ENCODE measurements at regions of chr7 and their contacts with region 1.

Region 1: DNA sequence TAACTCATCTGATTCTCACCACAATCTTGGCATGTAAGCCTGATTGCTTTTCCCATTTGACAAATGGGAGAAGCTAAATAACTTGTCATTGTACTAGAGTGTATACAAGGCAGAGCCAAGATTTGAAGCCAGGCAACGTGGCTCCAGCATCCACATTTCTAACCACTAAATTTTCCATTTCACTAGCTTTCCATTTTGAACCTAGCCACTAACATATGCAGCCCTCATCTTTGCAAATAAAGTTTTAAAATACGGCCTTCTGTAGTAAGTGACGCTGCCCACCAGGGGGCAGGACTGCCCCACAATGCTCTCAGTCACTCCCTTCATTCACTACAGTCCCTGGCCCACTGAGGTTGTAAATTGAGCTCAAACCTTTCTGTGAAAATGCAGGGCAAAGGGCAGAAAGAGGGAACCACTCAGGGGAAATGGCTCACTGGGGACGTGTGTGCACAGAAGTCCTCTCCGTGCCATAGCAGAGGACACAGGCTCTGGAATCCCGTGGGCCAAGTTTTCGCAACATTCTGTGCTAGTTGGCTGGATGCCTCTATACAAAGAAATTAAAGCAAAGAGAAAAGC is 315.7 kb downstream of the TNS3 start:
- DNase-seq: peak; percentile 68
- CTCF ChIP-seq: peak; percentile 81

Region 2: GRCh38 chr7:47088329-47089067 is 177.7 kb before region 1 on chr7:
- CTCF ChIA-PET with region 1: no interaction called
- POLR2A ChIA-PET with region 1: no interaction called
- DNase-seq: peak; percentile 58
- CTCF ChIP-seq: peak; percentile 80

Region 3: DNA sequence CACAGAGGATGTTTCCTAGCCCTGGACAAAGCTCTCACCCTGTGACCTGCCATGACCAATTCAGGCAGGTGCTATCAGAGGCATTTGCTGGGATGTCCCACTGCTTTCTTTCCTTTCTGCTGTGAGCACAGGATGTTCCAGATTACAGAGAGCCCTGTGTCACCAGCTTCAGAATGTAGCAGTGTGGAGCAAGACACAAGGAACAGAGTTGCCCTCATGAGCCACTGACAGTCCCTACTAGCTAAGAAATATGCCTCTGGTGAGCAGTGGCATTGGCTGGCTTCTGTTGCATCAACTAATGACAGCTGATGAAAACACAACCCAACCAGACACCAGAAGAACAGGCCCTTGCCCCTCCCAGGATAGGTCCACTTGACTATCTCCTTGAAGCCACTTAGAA is 21.5 kb before region 1 on chr7:
- CTCF ChIA-PET with region 1: interaction called, 11 read pairs
- POLR2A ChIA-PET with region 1: no interaction called
- DNase-seq: no peak
- CTCF ChIP-seq: no peak

Region 4: GRCh38 chr7:47283507-47284131 is 17.4 kb after region 1 on chr7:
- CTCF ChIA-PET with region 1: interaction called, 52 read pairs
- POLR2A ChIA-PET with region 1: no interaction called
- DNase-seq: no peak
- CTCF ChIP-seq: no peak

Region 5: GRCh38 chr7:47301105-47301477 is 34.9 kb after region 1 on chr7:
- CTCF ChIA-PET with region 1: interaction called, 12 read pairs
- POLR2A ChIA-PET with region 1: no interaction called
- DNase-seq: no peak
- CTCF ChIP-seq: no peak

Region 6: DNA sequence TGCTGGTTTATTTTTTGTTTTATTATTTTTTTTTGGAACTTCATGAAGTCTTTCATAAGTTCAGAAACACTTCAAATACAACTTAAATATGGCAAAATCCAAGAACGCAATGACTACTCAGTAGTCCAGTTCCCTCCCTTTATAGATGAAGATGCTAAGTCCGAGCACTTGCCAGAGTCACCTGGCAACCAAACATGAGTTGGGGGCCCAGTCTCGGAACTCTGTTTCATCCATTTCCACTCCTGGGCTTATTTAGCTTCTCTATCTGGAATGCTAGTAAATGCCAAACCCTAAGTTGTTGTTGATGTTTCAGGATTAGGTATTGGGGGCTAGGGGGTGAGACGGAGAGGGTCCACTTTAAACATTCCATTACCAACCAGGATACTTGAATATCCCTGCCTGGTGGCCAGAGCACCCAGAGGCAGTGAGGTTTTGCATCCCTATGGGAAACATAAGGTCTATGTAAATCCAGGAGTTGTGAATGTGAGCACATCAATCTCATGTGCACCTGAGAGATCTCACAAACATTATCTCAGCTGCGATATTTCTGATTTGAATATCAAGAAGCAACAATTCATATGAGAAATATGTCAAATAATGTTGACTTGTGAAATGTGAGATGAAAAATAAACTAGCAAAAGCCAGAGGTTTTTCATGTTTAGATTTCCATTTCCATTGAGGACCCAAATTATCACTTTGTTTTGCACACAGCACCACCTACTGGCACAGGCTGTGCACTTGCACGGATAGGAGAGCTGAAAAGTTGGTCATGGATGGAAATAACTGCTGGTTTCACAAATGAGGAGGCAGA is 552.8 kb after region 1 on chr7:
- CTCF ChIA-PET with region 1: interaction called, 65 read pairs
- POLR2A ChIA-PET with region 1: interaction called, 4 read pairs
- DNase-seq: peak; percentile 69
- CTCF ChIP-seq: peak; percentile 99

Region 7: GRCh38 chr7:47833211-47833610 is 567.0 kb after region 1 on chr7:
- CTCF ChIA-PET with region 1: interaction called, 18 read pairs
- POLR2A ChIA-PET with region 1: no interaction called
- DNase-seq: no peak
- CTCF ChIP-seq: no peak